AG04450 (cell line): ENCODE measurements at regions of chr5 and their contacts with region 1.

Region 1: GRCh38 chr5:144467792-144468191 is 297.1 kb downstream of the KCTD16 start:
- DNase-seq: peak; percentile 24
- H3K4me3 ChIP-seq: no peak overlapping the region
- H3K27ac ChIP-seq: no peak overlapping the region
- H3K27me3 ChIP-seq: no peaks in the 10 kb centered on the region
- CTCF ChIP-seq: peak; percentile 80

Region 2: GRCh38 chr5:143033535-143034250 is 1434.1 kb before region 1 on chr5:
- CTCF ChIA-PET with region 1: no interaction called
- POLR2A ChIA-PET with region 1: no interaction called
- DNase-seq: peak; percentile 81
- H3K4me3 ChIP-seq: no peak overlapping the region
- H3K27ac ChIP-seq: no peak overlapping the region
- H3K27me3 ChIP-seq: peaks cover 5% of the 10 kb centered on the region
- CTCF ChIP-seq: no peak

Region 3: GRCh38 chr5:144481861-144482260 is 14.1 kb after region 1 on chr5:
- CTCF ChIA-PET with region 1: interaction called, 11 read pairs
- POLR2A ChIA-PET with region 1: no interaction called
- DNase-seq: no peak
- H3K4me3 ChIP-seq: no peak overlapping the region
- H3K27ac ChIP-seq: no peak overlapping the region
- H3K27me3 ChIP-seq: no peaks in the 10 kb centered on the region
- CTCF ChIP-seq: no peak